H1 (cell line): ENCODE measurements at regions of chr5 and their contacts with region 1.

Region 1: GRCh38 chr5:147464211-147464610 is 45.7 kb downstream of the DPYSL3 start:
- DNase-seq: no peak
- H3K4me3 ChIP-seq: no peak overlapping the region
- H3K27ac ChIP-seq: no peak overlapping the region
- H3K4me1 ChIP-seq: peaks cover 3 to 24% (median 13%) of the 10 kb centered on the region in 4 experiments; a peak in 6 of 7 replicates
- H3K27me3 ChIP-seq: no peaks in the 10 kb centered on the region
- CTCF ChIP-seq: peak; percentile 7 to 81 (median 79)
- EP300 ChIP-seq: no peak
- POLR2A ChIP-seq: no peak
- RAD21 ChIP-seq: peak; percentile 69 to 82

Region 2: GRCh38 chr5:147453875-147454814 is 10.1 kb before region 1 on chr5:
- CTCF ChIA-PET with region 1: interaction called, 23 read pairs
- POLR2A ChIA-PET with region 1: interaction called, 10 read pairs
- DNase-seq: peak; percentile 70 to 94
- H3K4me3 ChIP-seq: peak overlapping the region; percentile 80 to 98 (median 94)
- H3K27ac ChIP-seq: peak overlapping the region; percentile 79; the same call in 1 of the 2 replicates
- H3K4me1 ChIP-seq: peaks cover 9 to 30% (median 25%) of the 10 kb centered on the region in 4 experiments; a peak in 6 of 7 replicates
- H3K27me3 ChIP-seq: no peaks in the 10 kb centered on the region
- CTCF ChIP-seq: peak; percentile 70 to 83 (median 70)
- EP300 ChIP-seq: no peak
- POLR2A ChIP-seq: peak in 1 of 2 experiments; percentile 58; a peak in 2 of 3 replicates
- RAD21 ChIP-seq: peak; percentile 76 to 77

Region 3: DNA sequence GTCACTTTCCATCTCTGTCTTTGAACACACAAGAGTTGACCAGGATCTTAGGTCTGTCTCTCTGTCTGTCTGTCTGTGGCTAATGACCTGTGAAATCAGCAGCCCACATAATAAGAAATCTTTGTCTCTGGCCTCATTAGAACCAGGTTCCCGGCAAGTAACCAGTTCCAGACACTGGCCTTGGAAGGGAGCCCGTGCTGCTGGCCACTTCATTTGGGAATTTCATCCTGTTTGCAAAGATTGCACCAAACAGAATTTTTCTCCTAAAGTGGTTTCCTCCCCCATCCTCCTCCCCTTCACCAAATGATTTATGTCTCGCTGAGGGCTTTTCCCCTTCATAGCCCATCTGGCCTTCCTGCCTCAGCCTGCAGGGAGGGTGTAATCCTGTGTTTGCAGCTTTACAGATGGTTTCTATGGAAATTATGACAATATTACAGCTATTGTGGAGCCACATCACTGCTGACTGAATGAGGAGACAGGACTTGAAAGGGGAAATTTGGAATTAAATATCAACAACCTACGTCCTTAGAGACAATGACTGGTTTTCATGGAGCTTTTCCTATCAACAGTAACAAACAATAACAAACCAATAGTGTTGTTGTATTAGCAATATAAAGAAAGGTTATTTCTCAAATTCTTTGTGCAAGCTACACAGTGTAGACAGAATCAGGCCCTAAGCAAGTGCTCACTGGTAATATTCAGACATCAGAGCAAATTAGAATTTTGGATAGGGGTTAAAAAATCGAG is 19.9 kb after region 1 on chr5:
- CTCF ChIA-PET with region 1: interaction called, 68 read pairs
- POLR2A ChIA-PET with region 1: interaction called, 7 read pairs
- DNase-seq: no peak
- H3K4me3 ChIP-seq: no peak overlapping the region
- H3K27ac ChIP-seq: peak overlapping the region; percentile 15; the same call in 1 of the 2 replicates
- H3K4me1 ChIP-seq: peaks cover 0 to 24% (median 15%) of the 10 kb centered on the region in 4 experiments; a peak in 5 of 7 replicates
- H3K27me3 ChIP-seq: no peaks in the 10 kb centered on the region
- CTCF ChIP-seq: no peak
- EP300 ChIP-seq: no peak
- POLR2A ChIP-seq: no peak
- RAD21 ChIP-seq: no peak

Region 4: DNA sequence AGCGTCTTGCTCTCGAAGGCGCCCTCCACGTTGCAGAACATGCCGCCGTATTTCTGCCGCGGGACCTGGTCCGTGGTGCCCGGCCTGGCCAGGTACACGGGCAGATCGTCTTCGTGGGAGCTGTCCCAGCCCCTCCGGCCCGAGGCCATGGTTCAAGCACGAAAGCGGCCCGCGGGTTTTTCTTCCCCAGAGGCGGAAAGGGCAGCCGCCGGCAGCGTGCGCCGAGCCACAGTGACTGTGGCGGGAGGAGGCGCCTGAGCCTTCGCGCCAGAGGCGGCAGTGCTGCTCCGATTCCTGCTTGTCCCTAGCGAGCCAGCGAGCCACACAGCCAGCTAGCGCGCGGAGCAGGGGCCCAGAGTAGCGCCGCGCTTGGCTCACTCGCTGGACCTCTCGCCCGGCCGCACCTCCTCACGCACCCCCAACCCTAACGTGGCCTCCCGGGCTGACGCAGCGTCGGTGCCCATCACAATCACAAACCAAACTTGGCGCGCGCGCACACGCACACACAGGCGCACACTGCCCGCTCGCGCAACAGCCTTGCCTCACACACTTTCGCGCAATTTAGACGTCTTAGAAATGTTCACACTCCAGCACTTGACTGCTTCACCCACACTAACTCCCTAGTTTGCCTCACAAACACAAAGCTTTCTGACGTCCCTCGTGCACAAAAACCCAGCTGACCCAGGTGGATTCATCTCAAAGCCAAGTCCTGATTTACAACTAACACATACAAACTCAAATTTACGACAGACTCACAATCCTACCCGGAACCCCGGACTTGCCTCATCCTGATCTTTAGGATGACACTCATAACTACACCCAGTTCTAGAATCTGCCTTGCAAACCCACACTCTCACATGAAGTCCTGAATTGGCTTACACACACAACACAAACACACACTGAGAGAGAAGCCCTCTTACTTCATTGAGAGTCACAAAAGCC is 45.8 kb after region 1 on chr5 and contains the start of gene DPYSL3:
- CTCF ChIA-PET with region 1: interaction called, 27 read pairs
- POLR2A ChIA-PET with region 1: interaction called, 6 read pairs
- DNase-seq: peak; percentile 44 to 84
- H3K4me3 ChIP-seq: peak within 1 kb of the TSS; percentile 70 to 96 (median 90)
- H3K27ac ChIP-seq: peak within 1 kb of the TSS; percentile 68; the same call in 1 of the 2 replicates
- H3K4me1 ChIP-seq: peaks cover 3 to 11% (median 5%) of the 10 kb centered on the region in 4 experiments; a peak in 5 of 7 replicates
- H3K27me3 ChIP-seq: peaks cover 2 to 13% (median 12%) of the 10 kb centered on the region in 4 experiments; a peak in 5 of 7 replicates
- CTCF ChIP-seq: peak; percentile 28 to 66 (median 48); a peak in 3 of 4 replicates
- EP300 ChIP-seq: no peak
- POLR2A ChIP-seq: peak in 1 of 2 experiments; percentile 73; a peak in 2 of 3 replicates
- RAD21 ChIP-seq: peak; percentile 40 to 48
- total RNA-seq, gene DPYSL3: 385 and 387 TPM in 2 replicates

Region 5: DNA sequence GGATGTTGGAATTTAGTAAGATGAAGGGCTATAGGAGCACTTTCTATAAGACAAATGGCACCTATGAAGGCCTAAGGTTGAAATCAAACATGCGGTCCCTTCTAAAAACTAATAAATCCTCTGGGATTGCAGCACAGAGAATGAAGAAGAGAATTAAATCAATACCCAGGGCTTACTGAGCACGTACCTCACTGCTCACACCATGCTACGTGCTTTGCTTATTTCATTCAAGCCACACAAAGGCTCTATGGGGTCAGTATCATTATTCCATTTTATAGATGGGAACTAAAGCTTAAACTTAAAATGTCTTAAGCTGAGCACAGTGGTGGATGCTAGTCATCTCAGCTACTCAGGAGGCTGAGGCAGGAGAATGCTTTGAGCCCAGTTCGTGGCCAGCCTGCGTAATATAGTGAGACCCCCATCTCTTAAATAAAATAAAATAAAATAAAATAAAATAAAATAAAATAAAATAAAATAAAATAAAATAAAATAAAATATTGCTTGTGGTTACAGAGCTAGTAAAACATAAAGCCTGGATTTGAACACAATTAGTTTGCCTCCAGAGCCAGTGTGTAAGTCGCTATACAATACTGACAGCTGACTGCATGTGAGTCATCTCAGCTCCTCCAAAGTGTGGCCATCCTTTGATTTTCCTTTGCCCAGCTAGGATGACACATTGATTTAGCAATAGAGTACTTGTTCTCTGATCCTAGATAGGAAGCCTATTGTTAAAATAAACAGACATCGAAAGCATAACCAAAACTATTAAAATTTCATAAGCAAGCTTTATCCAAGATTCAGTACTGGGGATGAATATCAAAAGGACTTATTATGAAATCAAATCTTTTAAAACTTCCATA is 66.5 kb after region 1 on chr5:
- CTCF ChIA-PET with region 1: interaction called, 11 read pairs
- POLR2A ChIA-PET with region 1: no interaction called
- DNase-seq: no peak
- H3K4me3 ChIP-seq: no peak overlapping the region
- H3K27ac ChIP-seq: no peak overlapping the region
- H3K4me1 ChIP-seq: no peaks in the 10 kb centered on the region
- H3K27me3 ChIP-seq: no peaks in the 10 kb centered on the region
- CTCF ChIP-seq: no peak
- EP300 ChIP-seq: no peak
- POLR2A ChIP-seq: no peak
- RAD21 ChIP-seq: no peak

Region 6: GRCh38 chr5:147539053-147539452 is 74.8 kb after region 1 on chr5:
- CTCF ChIA-PET with region 1: interaction called, 27 read pairs
- POLR2A ChIA-PET with region 1: no interaction called
- DNase-seq: no peak
- H3K4me3 ChIP-seq: no peak overlapping the region
- H3K27ac ChIP-seq: no peak overlapping the region
- H3K4me1 ChIP-seq: no peaks in the 10 kb centered on the region
- H3K27me3 ChIP-seq: no peaks in the 10 kb centered on the region
- CTCF ChIP-seq: no peak
- EP300 ChIP-seq: no peak
- POLR2A ChIP-seq: no peak
- RAD21 ChIP-seq: no peak

Region 7: GRCh38 chr5:147658293-147658932 is 194.2 kb after region 1 on chr5:
- CTCF ChIA-PET with region 1: no interaction called
- POLR2A ChIA-PET with region 1: no interaction called
- DNase-seq: no peak
- H3K4me3 ChIP-seq: no peak overlapping the region
- H3K27ac ChIP-seq: no peak overlapping the region
- H3K4me1 ChIP-seq: peaks cover 0 to 10% (median 1%) of the 10 kb centered on the region in 4 experiments; a peak in 4 of 7 replicates
- H3K27me3 ChIP-seq: no peaks in the 10 kb centered on the region
- CTCF ChIP-seq: no peak
- EP300 ChIP-seq: no peak
- POLR2A ChIP-seq: no peak
- RAD21 ChIP-seq: no peak